Heart right ventricle (tissue), 16 donors: ENCODE measurements at regions of chr1 and their contacts with region 1.

Region 1: GRCh38 chr1:231534703-231535159 is 6.3 kb downstream of the TSNAX start:
- DNase-seq: no peak
- ATAC-seq: peak in 1 of 8 donors; percentile 24
- H3K4me3 ChIP-seq: no peak overlapping the region
- H3K27ac ChIP-seq: peak overlapping the region in 5 of 10 donors; percentile 3 to 33 (median 9)
- H3K4me1 ChIP-seq: peaks cover 6 to 70% (median 60%) of the 10 kb centered on the region in 9 donors
- H3K27me3 ChIP-seq: no peaks in the 10 kb centered on the region
- CTCF ChIP-seq: no peak

Region 2: DNA sequence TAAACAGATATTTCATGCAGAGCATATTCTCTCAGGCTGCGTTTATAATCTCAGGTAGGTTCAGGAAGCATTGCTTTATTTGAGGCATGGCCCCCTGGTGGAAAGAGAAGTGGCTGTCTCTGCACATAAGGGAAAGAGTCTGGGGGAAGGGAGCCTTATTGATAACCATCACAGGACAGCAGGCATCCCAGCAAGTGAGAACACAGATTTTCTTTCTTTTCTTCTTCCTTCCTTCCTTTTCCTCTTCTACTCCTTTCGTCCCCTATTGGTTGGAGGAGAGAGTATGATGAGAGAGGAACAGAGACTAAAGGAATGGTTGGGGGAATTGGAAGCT is 15.7 kb after region 1 on chr1:
- intact Hi-C with region 1: no loop called
- DNase-seq: no peak
- ATAC-seq: no peak
- H3K4me3 ChIP-seq: no peak overlapping the region
- H3K27ac ChIP-seq: no peak overlapping the region
- H3K4me1 ChIP-seq: peaks cover 0 to 65% (median 20%) of the 10 kb centered on the region in 9 donors
- H3K27me3 ChIP-seq: no peaks in the 10 kb centered on the region
- CTCF ChIP-seq: peak in 8 of 9 donors; percentile 5 to 50 (median 41)

Region 3: GRCh38 chr1:231590453-231591198 is 55.9 kb after region 1 on chr1:
- intact Hi-C with region 1: loop called in 1 of 10 experiments (anchors 10 kb)
- DNase-seq: peak; percentile 22 to 49
- ATAC-seq: peak in 7 of 8 donors; percentile 82 to 95 (median 92)
- H3K4me3 ChIP-seq: no peak overlapping the region
- H3K27ac ChIP-seq: peak overlapping the region in 2 of 10 donors; percentile 56 to 67
- H3K4me1 ChIP-seq: peaks cover 0 to 37% (median 8%) of the 10 kb centered on the region in 9 donors
- H3K27me3 ChIP-seq: no peaks in the 10 kb centered on the region
- CTCF ChIP-seq: peak; percentile 65 to 88 (median 80)